Activated T-helper 2 cell treated with anti-CD3 and anti-CD28 coated beads, Interferon-gamma antibody, Interleukin-2, Interleukin-4, amounts not matched to agents 10 μg/mL and 5 μg/mL and 100 μg/mL, durations not matched to agents 14 hours and 24 hours and 36 hours (primary cell): ENCODE measurements at regions of chr16 and their contacts with region 1.

Region 1: GRCh38 chr16:4660454-4661007 is 32.8 kb upstream of the NUDT16L1 start:
- DNase-seq: peak; percentile 62
- H3K4me3 Mint-ChIP-seq: no peak overlapping the region
- H3K27ac Mint-ChIP-seq: peak overlapping the region; percentile 67
- H3K4me1 Mint-ChIP-seq: peaks cover 36% of the 10 kb centered on the region
- H3K27me3 Mint-ChIP-seq: no peaks in the 10 kb centered on the region

Region 2: DNA sequence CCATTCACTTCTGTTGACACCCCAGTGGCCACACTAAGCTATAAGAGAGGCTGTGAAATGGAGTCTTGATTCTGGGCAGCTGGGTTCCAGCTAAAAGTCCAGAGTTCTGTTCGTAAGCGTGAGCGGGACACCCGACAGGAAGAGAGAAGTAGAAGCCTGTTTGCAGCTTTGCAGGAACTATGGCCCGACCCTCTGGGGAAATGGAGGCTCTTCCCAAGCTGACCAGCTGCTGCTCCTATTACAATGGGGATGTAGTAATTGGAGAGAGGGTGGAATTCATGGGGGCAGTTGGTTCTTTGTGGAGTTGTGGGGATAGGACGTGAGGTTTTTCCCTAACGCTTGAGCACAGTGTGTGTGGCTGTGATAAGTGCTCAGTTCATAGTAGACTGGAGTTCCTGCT is 74.2 kb before region 1 on chr16:
- intact Hi-C with region 1: no loop called
- DNase-seq: no peak
- H3K4me3 Mint-ChIP-seq: no peak overlapping the region
- H3K27ac Mint-ChIP-seq: no peak overlapping the region
- H3K4me1 Mint-ChIP-seq: peaks cover 4% of the 10 kb centered on the region
- H3K27me3 Mint-ChIP-seq: peaks cover 11% of the 10 kb centered on the region

Region 3: GRCh38 chr16:4624015-4624826 is 36.3 kb before region 1 on chr16 and contains the start of gene MGRN1:
- intact Hi-C with region 1: loop called (anchors 5 kb)
- DNase-seq: peak; percentile 91
- H3K4me3 Mint-ChIP-seq: peak within 1 kb of the TSS; percentile 95
- H3K27ac Mint-ChIP-seq: peak within 1 kb of the TSS; percentile 97
- H3K4me1 Mint-ChIP-seq: peaks cover 25% of the 10 kb centered on the region
- H3K27me3 Mint-ChIP-seq: no peaks in the 10 kb centered on the region
- total RNA-seq, gene MGRN1: 124 TPM in 2 replicates

Region 4: GRCh38 chr16:4679850-4680636 is 19.5 kb after region 1 on chr16:
- intact Hi-C with region 1: loop called (anchors 1 kb)
- DNase-seq: no peak
- H3K4me3 Mint-ChIP-seq: no peak overlapping the region
- H3K27ac Mint-ChIP-seq: peak overlapping the region; percentile 33
- H3K4me1 Mint-ChIP-seq: peaks cover 20% of the 10 kb centered on the region
- H3K27me3 Mint-ChIP-seq: no peaks in the 10 kb centered on the region